ENCODE measurements at regions of chr9 and their contacts with region 1.

Region 1: DNA sequence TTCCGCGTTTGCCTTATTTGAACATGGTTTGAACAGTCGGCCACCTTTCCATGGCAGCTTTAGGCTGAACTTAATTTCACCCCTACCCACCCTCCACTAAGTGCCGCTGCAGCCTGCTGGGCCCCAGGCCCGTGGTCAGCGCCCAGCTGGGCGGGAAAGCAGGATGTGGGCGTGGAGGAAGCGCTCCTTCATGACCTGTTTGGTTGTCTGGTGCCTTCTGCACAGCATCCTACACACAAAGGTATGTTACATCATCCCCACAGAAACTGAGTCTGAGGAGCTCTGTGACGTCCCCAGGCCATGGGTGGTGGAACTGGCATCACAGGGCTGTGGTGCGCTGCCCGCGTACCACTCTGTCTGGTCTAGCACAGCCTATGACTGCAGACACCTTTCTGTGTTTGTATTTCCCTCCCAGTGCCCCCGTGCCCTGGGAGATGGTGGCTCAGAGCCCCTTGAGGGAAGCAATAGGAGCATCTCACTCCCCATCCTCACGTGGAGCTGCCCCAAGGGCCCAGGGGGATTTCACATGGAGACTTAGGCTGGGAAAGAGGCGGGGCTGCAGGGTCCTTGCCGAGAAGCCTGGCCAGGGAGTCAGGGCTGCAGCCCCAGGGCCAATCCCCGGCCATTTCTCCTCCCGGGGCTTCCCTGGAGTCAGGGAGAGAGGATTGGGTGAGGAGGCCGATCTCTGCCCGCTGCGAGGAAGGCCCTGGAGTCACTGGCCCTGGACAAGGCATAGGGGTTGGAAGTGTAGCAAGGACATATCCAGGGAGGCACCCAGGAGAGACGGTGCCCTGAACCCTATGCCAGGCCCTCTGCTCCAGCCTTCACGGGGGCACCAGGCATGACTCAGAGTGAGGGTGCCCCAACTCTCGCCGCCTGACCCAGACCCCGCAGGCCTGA is 37.5 kb upstream of the SUSD3 start:
- DNase-seq: peak; percentile 68
- H3K4me3 Mint-ChIP-seq: no peak overlapping the region
- H3K27ac Mint-ChIP-seq: peak overlapping the region; percentile 84
- H3K4me1 Mint-ChIP-seq: peaks cover 79% of the 10 kb centered on the region
- H3K27me3 Mint-ChIP-seq: no peaks in the 10 kb centered on the region

Region 2: GRCh38 chr9:92837191-92837590 is 183.8 kb before region 1 on chr9:
- CTCF ChIA-PET with region 1: no interaction called
- DNase-seq: no peak
- H3K4me3 Mint-ChIP-seq: no peak overlapping the region
- H3K27ac Mint-ChIP-seq: no peak overlapping the region
- H3K4me1 Mint-ChIP-seq: no peaks in the 10 kb centered on the region
- H3K27me3 Mint-ChIP-seq: peaks cover 4% of the 10 kb centered on the region

Region 3: DNA sequence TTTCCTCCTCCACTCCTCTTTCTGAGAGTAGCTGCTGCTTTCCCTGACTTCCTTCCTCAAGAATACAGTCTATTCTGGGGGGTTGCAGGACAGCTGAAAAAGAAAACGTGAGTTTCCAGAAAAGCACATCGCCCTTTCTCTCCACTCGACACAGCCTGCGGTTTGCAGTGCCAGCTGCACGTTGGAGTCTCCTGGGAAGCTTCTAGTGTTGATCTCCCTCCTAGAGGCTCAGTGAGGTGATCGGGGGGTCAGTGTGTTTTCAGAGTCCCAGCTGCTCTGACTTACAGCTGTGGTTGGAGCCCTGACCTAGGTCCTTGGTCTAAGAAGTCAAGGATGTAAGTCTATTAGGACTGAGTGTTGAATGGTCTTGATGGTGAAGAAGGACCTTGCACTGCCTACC is 12.5 kb after region 1 on chr9:
- CTCF ChIA-PET with region 1: interaction called, 10 read pairs
- DNase-seq: no peak
- H3K4me3 Mint-ChIP-seq: no peak overlapping the region
- H3K27ac Mint-ChIP-seq: peak overlapping the region; percentile 86
- H3K4me1 Mint-ChIP-seq: peaks cover 55% of the 10 kb centered on the region
- H3K27me3 Mint-ChIP-seq: no peaks in the 10 kb centered on the region